Esophagus squamous epithelium (tissue), 5 donors: ENCODE measurements at regions of chr14 and their contacts with region 1.

Region 1: GRCh38 chr14:23379366-23380196 is 2.7 kb downstream of the CMTM5 start:
- DNase-seq: no peak
- H3K4me3 ChIP-seq: no peak overlapping the region
- H3K27ac ChIP-seq: no peak overlapping the region
- H3K4me1 ChIP-seq: peaks cover 0 to 14% (median 0%) of the 10 kb centered on the region in 3 donors
- H3K27me3 ChIP-seq: peaks cover 0 to 32% (median 0%) of the 10 kb centered on the region in 4 donors
- CTCF ChIP-seq: peak; percentile 86 to 98 (median 94)
- POLR2A ChIP-seq: no peak

Region 2: DNA sequence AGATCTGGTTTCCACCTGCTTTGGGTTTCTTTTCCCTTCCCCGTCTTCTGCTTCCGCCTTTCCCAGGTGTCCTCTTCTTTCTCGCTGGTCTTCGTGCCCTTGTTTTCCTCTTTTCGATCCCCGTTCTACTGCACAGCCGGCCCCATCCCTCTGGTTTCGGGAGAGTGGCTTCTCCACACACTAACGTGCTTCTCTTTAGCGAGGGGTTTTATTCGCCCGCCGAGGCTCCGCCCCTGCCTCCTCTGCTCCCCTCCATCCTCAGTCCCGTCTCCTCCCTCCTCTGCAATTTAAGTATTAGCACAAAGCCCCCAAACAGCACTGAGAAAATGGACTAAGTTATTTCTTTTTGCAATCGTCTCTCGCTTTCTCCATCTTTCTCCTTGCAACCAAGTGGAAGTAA is 196.1 kb before region 1 on chr14 and contains the start of gene SLC7A8:
- intact Hi-C with region 1: no loop called
- DNase-seq: no peak
- H3K4me3 ChIP-seq: peak within 1 kb of the TSS; percentile 38 to 72 (median 60)
- H3K27ac ChIP-seq: peak within 1 kb of the TSS; percentile 33 to 76 (median 58)
- H3K4me1 ChIP-seq: peaks cover 8 to 41% (median 10%) of the 10 kb centered on the region in 3 donors
- H3K27me3 ChIP-seq: peaks cover 0 to 15% (median 0%) of the 10 kb centered on the region in 4 donors
- CTCF ChIP-seq: no peak
- POLR2A ChIP-seq: peak in 2 of 4 donors; percentile 72 to 80
- total RNA-seq, gene SLC7A8: 22.2 to 58.0 (median 39.8) TPM

Region 3: DNA sequence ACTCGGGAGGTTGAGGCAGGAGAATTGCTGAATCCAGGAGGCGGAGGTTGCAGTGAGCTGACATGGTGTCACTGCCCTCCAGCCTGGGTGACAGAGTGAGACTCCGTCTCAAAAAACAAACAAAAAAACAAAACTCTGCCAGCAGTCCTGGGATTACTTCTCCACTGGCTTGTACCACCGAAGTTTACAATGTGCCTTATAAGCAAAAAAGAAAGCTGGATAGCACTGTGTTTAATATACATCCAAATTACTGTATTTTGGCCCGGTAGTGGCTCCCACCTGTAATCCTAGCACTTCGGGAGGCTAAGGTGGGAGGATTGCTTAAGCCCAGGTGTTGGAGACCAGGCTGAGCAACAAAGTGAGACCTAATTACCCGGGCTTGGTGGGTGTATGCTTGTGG is 110.4 kb before region 1 on chr14:
- intact Hi-C with region 1: loop called (anchors 10 kb)
- DNase-seq: no peak
- H3K4me3 ChIP-seq: no peak overlapping the region
- H3K27ac ChIP-seq: no peak overlapping the region
- H3K4me1 ChIP-seq: no peaks in the 10 kb centered on the region
- H3K27me3 ChIP-seq: no peaks in the 10 kb centered on the region
- CTCF ChIP-seq: no peak
- POLR2A ChIP-seq: no peak

Region 4: GRCh38 chr14:23327947-23328744 is 51.4 kb before region 1 on chr14:
- intact Hi-C with region 1: loop called (anchors 2 kb)
- DNase-seq: no peak
- H3K4me3 ChIP-seq: no peak overlapping the region
- H3K27ac ChIP-seq: no peak overlapping the region
- H3K4me1 ChIP-seq: peaks cover under 1 to 21% (median 4%) of the 10 kb centered on the region in 3 donors
- H3K27me3 ChIP-seq: no peaks in the 10 kb centered on the region
- CTCF ChIP-seq: peak; percentile 70 to 92 (median 88)
- POLR2A ChIP-seq: no peak

Region 5: DNA sequence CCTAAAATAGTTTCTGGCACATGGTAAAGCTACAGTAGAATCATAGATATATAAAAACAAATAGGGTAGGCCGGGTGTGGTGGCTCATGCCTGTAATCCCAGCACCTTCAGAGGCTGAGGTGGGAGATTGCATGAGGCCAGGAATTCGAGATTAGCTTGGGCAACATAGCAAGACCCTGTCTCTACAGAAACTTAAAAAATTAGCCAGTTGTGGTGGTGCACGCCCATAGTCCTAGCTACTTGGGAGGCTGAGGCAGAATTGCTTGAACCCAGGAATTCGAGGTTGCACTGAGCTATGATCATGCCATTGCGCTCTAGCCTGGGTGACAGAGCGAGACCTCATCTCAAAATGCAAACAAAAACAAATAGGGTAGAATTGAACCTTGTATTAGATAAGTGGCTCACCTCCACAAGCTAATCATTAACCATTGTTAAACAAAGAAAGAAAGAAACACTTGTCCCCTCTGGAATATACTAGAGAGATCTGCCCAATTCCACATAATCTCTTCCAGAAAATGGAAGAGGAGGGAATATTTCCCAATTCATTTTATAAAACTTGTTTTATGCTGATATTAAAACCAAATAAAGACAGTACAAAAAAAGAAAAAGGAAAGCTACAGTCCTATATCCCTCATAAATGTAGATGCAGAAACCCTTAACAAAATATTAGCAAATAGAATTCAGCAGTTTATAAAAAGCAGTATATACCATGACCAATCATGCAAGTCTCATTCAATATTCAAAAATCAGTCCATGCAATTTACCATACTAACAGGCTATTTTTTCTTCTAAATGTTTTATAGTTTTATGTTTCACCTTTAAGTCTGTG is 233.9 kb after region 1 on chr14:
- intact Hi-C with region 1: no loop called
- DNase-seq: no peak
- H3K4me3 ChIP-seq: no peak overlapping the region
- H3K27ac ChIP-seq: no peak overlapping the region
- H3K4me1 ChIP-seq: peaks cover 0 to 16% (median 0%) of the 10 kb centered on the region in 3 donors
- H3K27me3 ChIP-seq: peaks cover 0 to 15% (median 0%) of the 10 kb centered on the region in 4 donors
- CTCF ChIP-seq: no peak
- POLR2A ChIP-seq: no peak

Region 6: DNA sequence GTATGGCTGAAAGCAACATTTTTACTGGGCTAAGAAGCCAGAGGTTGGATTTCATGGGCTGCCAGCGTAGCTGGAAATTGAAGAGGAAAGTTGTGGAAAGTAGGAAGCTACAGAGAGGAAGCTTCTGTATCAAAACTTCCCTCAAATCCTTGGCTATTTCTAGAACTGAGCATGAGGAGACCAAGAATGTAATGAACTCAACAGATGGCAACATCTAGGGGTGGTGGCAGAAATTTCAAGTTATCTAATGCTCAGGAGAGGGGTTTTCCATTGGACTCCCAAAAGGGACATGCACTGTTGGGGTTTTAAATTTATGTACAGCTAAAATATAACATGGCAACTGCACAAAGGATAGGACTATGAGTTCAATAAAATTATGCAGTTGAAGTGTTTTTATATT is 407.9 kb after region 1 on chr14:
- intact Hi-C with region 1: no loop called
- DNase-seq: no peak
- H3K4me3 ChIP-seq: no peak overlapping the region
- H3K27ac ChIP-seq: no peak overlapping the region
- H3K4me1 ChIP-seq: no peaks in the 10 kb centered on the region
- H3K27me3 ChIP-seq: no peaks in the 10 kb centered on the region
- CTCF ChIP-seq: no peak
- POLR2A ChIP-seq: no peak